Astrocyte of the cerebellum (primary cell): ENCODE measurements at regions of chr3 and their contacts with region 1.

Region 1: DNA sequence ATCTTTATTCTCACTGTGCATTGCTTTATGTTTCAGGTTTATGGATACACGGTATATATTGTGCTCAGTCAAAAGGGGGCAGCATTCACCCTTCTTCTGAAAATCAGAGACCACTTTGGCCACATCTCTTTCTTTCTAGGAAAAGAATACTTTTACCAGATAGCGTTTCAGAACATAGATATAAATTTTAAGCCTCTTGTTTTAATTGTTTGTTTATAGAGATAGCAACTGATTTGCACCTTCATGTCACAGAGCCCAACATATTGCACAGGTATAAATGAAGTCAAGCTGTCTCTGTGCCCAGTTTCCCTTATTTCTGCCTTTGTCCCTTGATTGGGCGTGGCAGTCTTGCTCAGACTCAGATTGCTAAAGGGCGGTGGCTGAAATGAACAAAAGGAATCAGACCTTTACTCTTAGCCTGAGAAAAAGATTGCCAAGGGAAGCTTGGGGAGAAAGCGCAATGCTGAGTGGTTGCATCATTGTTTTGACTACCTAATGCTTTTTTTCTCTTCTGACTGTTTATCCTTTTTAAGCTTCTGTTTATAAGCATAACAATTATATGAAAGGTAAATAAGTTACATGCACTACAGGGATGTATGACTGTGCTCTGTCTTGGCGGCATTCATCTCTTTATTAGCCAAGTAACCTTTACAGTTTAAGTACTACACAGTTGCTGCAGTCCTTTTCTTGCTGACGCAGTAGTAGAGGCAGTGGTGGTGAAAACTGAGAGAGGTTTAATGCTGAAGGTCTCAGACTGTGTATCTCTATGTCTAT is 70.8 kb upstream of the ZBTB20 start:
- DNase-seq: peak; percentile 40
- H3K4me3 ChIP-seq: no peak overlapping the region
- CTCF ChIP-seq: peak; percentile 67

Region 2: DNA sequence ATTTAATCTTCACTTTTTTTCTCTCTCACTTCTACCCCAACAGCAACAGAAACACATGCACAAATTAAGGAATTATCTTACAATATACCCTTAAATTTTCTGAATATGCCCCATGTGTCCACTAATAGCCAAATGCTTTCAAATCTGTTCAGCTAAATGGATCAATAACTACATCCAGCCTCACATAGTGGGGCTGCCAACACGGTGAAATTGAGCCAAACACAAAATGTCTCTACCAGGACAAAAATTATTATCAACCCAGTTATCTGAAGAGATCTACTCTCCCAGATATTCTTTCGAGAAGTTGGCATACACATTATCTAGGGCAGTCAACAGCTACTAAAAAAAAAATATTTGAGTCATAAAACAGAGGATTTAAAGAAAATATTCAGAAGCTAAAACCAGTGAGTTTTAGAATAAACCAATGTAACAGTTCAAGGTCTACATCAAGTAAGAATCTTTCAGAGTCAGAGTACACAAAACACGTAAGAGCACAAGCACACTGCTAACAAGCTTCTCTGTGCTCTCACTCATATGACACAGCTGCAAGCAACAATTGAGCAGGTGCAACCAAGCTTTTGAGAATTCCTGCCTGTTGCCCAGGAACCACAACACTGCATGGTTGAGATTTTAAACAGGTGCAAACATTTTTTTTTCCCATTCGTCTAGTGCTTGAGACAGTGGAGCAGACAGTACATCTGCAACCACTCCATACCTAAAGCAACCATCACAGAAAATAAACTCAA is 318.5 kb before region 1 on chr3:
- in situ Hi-C with region 1: no loop called
- DNase-seq: no peak
- H3K4me3 ChIP-seq: no peak overlapping the region
- CTCF ChIP-seq: no peak

Region 3: DNA sequence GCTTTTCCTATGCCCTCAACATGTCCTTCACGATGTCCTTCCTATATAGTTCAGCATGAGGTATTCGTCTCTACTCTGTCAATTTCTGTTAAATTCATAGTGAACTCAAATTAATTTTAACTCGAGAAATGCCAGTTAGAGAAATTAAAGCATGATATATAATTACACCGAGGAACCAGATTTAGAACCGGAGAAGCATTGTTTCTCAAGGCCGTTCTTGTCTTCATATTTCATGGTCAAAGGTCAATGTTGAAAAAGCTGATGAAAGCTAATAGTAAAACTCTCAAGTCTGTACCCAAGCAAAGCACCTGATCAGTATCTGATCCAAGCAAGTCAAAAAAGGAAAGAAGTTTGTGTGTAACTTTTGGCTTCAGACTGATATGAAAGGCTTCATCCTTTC is 234.6 kb before region 1 on chr3:
- in situ Hi-C with region 1: no loop called
- DNase-seq: no peak
- H3K4me3 ChIP-seq: no peak overlapping the region
- CTCF ChIP-seq: no peak

Region 4: GRCh38 chr3:115658337-115659181 is 440.7 kb after region 1 on chr3:
- in situ Hi-C with region 1: loop called (anchors 25 kb)
- DNase-seq: peak; percentile 46
- H3K4me3 ChIP-seq: peak overlapping the region; percentile 57
- CTCF ChIP-seq: no peak

Region 5: DNA sequence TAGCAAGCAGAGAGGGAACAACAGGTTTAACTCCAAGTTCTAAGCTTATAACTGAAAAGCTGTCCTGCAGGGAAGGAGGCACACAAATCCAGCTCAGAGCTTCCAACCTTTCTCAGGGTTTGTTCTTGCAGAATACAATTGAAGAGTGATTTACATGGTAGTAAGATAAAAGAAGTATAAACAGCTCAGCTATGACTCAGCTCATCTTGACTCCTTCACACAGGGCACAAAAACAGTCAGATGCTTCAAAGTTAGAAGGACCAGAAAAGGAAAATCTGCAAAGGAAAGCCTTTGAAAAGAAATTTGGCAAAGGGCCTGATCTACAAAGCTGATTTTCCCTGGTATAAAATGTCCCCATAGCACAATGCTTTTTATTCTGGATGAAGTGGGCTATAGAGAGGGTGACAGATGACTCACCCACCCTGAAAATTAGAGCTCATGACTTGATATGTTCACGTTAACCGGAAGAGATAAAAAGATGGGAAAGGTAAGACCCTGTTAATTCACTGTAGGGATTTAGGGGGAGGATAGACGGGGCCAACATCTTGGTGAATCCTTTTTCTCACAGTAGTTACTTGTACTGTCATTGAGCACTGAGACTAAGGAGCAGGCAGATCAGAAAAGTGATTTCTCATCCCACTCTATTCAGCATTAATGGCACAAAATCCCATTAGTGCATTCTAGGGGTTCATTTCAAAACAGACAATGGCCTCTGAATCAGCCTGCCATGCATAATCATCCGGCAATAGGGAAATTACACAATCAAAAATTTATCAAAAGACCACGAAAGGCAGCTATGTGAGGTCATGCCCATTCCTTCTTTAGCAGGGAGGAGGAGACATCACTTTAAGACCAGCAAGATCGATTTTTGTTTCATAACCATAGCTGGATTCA is 549.0 kb after region 1 on chr3:
- in situ Hi-C with region 1: loop called (anchors 10 kb)
- DNase-seq: peak; percentile 49
- H3K4me3 ChIP-seq: no peak overlapping the region
- CTCF ChIP-seq: no peak

Region 6: GRCh38 chr3:115804722-115805121 is 586.9 kb after region 1 on chr3:
- in situ Hi-C with region 1: loop called (anchors 5 kb)
- DNase-seq: no peak
- H3K4me3 ChIP-seq: no peak overlapping the region
- CTCF ChIP-seq: no peak